Sigmoid colon (tissue), 7 donors: ENCODE measurements at regions of chr11 and their contacts with region 1.

Region 1: DNA sequence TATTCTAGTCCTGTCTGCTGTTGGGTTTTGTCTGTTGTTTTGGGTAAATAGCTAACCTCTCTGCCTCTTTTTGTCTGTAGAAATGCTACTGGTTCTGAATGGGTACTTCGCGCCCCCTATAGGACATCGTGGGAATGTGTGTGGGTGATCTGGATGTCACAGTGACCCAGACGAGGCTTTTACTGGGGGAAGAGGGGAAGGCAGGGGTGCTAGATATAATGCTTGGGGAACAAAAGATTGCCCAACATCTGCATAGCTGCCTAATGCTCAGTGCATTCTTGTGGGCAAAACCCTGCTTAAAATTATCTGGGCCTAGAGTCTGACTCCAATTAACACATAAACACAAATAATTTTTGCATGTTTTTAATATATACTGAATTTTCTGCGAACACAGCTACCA is 57.7 kb downstream of the BMAL1 start:
- DNase-seq: peak; percentile 72
- H3K4me3 ChIP-seq: no peak overlapping the region
- H3K27ac ChIP-seq: no peak overlapping the region
- H3K4me1 ChIP-seq: peaks cover 0 to 49% (median 30%) of the 10 kb centered on the region in 4 donors
- H3K27me3 ChIP-seq: no peaks in the 10 kb centered on the region
- CTCF ChIP-seq: peak; percentile 47 to 77 (median 64)
- EP300 ChIP-seq: no peak
- POLR2A ChIP-seq: no peak

Region 2: GRCh38 chr11:13210424-13210823 is 124.9 kb before region 1 on chr11:
- intact Hi-C with region 1: loop called (anchors 2 kb)
- DNase-seq: peak; percentile 74
- H3K4me3 ChIP-seq: no peak overlapping the region
- H3K27ac ChIP-seq: no peak overlapping the region
- H3K4me1 ChIP-seq: peaks cover 0 to 5% (median 0%) of the 10 kb centered on the region in 4 donors
- H3K27me3 ChIP-seq: peaks cover 0 to 3% (median 0%) of the 10 kb centered on the region in 3 donors
- CTCF ChIP-seq: peak; percentile 18 to 64 (median 50)
- EP300 ChIP-seq: no peak
- POLR2A ChIP-seq: no peak

Region 3: DNA sequence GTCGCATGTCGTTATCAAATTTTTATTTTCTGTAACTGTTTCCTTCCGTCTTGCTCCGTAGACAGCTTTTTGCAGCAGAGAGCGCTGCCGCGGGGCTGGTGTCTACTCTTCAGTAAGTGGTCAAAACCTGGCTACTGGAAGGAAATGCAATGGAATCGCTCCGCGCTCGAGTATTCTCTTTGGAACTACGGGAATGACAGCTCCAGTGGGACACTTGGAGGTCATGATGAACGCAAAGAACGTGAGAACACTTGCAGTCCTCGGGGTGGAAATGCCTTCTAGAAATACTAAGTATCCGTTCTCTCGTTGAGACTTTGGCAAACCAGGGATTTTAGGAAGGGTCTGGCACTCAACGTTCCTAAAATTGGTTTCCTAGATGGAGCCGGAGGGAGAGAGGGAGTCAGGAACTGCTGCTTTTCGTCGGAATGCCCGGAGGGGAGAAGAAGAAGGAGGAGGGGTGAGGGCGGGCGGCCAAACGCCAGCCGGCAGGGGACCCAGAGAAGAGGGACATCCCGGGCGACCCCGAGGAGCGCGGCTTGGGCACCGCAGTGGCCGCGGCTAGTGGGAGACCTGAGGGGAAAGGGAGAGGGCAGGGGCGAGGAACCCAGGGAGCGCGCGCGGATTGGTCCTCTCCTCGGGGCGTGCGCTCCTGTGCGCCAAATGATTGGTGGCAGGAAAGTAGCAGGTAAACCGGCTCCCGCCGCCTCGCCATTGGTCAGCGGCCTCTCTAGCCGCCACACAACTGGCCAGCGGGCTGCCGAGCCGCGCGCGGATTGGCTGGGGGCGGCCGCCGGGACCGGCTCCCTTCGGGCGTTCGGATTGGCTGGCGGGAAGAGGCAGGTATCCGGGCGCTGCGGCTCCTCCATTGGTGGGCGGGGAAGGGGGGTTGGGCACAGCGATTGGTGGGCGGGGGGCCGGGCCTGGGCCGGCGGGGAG is 58.2 kb before region 1 on chr11:
- intact Hi-C with region 1: loop called (anchors 2 kb)
- DNase-seq: peak; percentile 99
- H3K4me3 ChIP-seq: peak overlapping the region; percentile 48 to 87 (median 78)
- H3K27ac ChIP-seq: peak overlapping the region; percentile 89 to 95 (median 92)
- H3K4me1 ChIP-seq: peaks cover 0 to 33% (median 19%) of the 10 kb centered on the region in 4 donors
- H3K27me3 ChIP-seq: no peaks in the 10 kb centered on the region
- CTCF ChIP-seq: no peak
- EP300 ChIP-seq: no peak
- POLR2A ChIP-seq: peak; percentile 54 to 78

Region 4: DNA sequence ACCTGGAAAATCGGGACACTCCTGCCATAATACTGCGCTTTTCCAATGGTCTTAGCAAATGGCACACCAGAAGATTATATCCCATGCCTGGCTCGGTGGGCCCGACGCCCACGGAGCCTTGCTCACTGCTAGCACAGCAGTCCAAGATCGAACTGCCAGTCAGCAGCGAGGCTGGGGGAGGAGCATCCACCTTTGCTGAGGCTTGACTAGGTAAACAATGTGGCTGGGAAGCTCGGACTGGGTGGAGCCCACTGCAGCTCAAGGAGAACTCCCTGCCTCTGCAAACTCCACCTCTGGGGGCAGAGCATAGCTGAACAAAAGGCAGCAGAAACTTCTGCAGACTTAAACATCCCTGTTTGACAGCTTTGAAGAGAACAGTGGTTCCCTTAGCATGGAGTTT is 144.9 kb after region 1 on chr11:
- intact Hi-C with region 1: no loop called
- DNase-seq: no peak
- H3K4me3 ChIP-seq: no peak overlapping the region
- H3K27ac ChIP-seq: no peak overlapping the region
- H3K4me1 ChIP-seq: no peaks in the 10 kb centered on the region
- H3K27me3 ChIP-seq: no peaks in the 10 kb centered on the region
- CTCF ChIP-seq: no peak
- EP300 ChIP-seq: no peak
- POLR2A ChIP-seq: no peak